PC-9 (cell line): ENCODE measurements at regions of chr5 and their contacts with region 1.

Region 1: DNA sequence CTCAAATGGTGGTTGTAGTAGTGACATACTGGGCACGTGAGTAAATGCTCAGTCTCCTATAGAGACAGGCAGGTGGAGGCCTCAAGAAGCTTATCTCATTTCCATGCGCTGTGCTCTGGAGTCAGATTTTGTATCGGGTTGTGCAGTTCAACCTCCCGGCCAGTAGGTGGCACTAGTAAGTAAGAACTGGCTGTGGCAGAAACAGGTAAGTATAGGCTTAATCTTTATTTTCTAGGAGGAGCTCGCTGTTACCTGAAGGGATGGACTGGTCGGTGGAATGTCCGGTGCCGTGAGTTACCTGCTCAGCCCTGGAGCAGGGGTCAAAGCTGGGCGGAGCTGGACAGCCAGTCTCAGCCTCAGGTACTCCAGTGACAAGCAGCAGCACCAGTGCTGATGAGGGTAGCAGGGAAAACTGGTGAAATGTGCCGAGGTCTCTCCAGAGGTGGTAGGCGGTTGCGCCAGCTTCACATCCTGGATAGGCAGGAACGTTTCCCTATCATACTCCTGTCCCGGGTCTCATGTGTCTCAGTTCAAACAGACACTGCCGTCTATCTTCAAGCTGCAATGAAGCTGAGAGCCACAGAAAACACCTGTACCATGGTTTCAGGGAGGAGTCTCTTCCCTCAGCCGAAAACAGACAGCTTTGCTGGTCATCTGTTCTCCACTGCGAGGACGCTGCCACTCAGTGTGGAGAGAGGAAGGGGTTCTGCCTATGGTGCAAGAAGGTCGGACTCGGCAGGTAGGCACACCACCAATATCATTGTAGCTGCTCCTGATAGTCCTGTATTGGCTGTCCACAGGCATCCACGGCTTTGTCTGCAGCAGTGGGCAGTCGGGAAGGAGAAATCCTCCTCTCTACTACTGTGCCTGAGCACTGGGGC is 880.3 kb upstream of the SEMA6A start:
- DNase-seq: peak; percentile 70 to 81
- H3K4me3 ChIP-seq: peak overlapping the region; percentile 89
- H3K27ac ChIP-seq: no peak overlapping the region
- H3K4me1 ChIP-seq: 0 out of 2 replicates have a peak, but pooled peaks cover 4% of the 10 kb centered on the region
- H3K27me3 ChIP-seq: no peaks in the 10 kb centered on the region
- CTCF ChIP-seq: peak; percentile 91

Region 2: GRCh38 chr5:118791926-118792734 is 1337.2 kb after region 1 on chr5:
- CTCF ChIA-PET with region 1: no interaction called
- POLR2A ChIA-PET with region 1: no interaction called
- intact Hi-C with region 1: loop called (anchors 5 kb)
- DNase-seq: peak; percentile 12 to 39
- H3K4me3 ChIP-seq: no peak overlapping the region
- H3K27ac ChIP-seq: no peak overlapping the region
- H3K4me1 ChIP-seq: no peaks in the 10 kb centered on the region
- H3K27me3 ChIP-seq: no peaks in the 10 kb centered on the region
- CTCF ChIP-seq: peak; percentile 77